Esophagus muscularis mucosa (tissue), 4 donors: ENCODE measurements at regions of chr3 and their contacts with region 1.

Region 1: DNA sequence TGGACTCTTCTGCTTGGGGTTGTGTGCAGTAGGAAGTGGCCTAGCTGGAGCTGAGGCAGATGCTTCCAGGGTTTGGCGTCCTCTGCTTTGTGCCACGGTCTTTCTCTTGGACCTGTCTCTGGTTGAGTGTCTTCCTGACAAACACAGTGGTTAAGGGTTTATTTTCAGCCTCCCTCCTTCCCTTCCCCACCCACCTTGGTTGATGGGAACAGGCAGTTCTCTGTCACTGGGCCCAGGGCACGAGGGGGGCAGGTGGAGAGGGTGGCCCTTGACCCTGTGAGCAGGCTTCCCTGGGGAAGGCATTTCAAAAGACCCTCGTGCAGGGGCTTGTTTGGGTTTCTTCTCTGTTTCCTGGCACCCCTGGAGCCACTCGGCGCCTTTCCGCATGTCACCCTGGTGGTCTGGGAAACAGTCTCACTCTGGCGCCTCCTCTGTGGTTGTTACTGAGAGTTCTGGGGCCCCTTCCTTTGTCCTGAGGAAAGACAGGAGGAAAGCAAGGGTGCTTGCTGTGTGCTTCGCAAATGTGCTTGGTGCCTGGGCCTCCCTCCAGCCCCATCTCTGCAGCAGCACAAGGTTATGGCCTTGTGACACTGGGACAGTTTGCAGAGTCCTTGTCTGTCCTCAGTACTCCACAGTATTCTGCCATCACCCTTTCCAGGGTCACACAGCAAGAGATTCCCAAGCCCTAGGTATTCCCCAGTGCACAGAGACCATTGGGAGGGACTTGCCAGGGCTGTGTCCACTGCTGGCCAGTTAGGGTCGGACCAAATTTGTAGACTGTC is 10.3 kb upstream of the STAB1 start:
- DNase-seq: no peak
- H3K4me3 ChIP-seq: no peak overlapping the region
- H3K27ac ChIP-seq: peak overlapping the region; percentile 67 to 84 (median 76)
- H3K4me1 ChIP-seq: peaks cover 30 to 59% (median 46%) of the 10 kb centered on the region in 4 donors
- H3K27me3 ChIP-seq: no peaks in the 10 kb centered on the region
- CTCF ChIP-seq: no peak
- EP300 ChIP-seq: no peak
- POLR2A ChIP-seq: no peak

Region 2: GRCh38 chr3:52406231-52406661 is 78.6 kb before region 1 on chr3:
- intact Hi-C with region 1: no loop called
- DNase-seq: no peak
- H3K4me3 ChIP-seq: no peak overlapping the region
- H3K27ac ChIP-seq: no peak overlapping the region
- H3K4me1 ChIP-seq: peaks cover 17 to 43% (median 31%) of the 10 kb centered on the region in 4 donors
- H3K27me3 ChIP-seq: no peaks in the 10 kb centered on the region
- CTCF ChIP-seq: no peak
- EP300 ChIP-seq: no peak
- POLR2A ChIP-seq: no peak

Region 3: DNA sequence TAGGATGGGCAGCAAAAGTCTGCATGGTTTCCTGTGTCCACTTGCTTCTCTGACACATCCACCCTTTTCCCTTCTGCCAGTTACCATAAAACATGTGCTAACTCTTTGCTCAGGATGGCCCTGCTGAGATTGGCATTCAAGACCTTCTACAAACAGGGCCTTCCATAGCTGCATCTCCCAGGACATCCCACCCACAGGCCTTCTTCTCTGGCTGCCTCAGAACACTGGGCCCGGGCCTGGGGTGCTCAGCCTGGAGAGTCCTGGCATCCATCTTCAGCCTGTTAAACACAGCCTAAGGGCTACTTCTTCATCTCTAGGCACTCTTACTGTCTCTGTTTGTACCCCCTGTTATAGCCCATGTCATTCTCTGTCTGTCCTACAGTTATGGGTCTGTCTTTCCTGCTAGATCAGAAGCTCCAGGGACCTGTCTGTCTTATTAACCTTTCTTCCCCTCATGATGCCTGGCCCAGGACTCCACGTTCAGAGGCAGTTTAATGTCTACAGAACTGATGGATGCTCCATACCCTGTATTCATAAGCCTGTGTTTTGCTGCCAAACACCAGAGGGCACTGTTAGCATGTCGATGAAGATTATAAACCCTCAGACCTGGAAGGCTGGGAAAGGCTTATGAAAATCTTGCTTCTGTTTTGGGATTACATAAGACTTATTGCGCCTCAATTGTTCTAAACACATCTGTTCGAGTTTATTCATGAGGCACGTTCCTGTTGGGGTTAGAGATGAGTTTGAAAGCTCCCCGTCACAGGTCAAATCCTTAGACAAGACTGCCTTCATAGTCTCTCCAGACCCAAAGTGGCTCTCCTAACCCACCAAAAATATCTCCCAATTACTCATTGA is 56.5 kb before region 1 on chr3:
- intact Hi-C with region 1: no loop called
- DNase-seq: no peak
- H3K4me3 ChIP-seq: no peak overlapping the region
- H3K27ac ChIP-seq: peak overlapping the region in 1 of 4 donors; percentile 3
- H3K4me1 ChIP-seq: peaks cover 13 to 35% (median 20%) of the 10 kb centered on the region in 4 donors
- H3K27me3 ChIP-seq: no peaks in the 10 kb centered on the region
- CTCF ChIP-seq: peak; percentile 74 to 81 (median 76)
- EP300 ChIP-seq: no peak
- POLR2A ChIP-seq: no peak

Region 4: DNA sequence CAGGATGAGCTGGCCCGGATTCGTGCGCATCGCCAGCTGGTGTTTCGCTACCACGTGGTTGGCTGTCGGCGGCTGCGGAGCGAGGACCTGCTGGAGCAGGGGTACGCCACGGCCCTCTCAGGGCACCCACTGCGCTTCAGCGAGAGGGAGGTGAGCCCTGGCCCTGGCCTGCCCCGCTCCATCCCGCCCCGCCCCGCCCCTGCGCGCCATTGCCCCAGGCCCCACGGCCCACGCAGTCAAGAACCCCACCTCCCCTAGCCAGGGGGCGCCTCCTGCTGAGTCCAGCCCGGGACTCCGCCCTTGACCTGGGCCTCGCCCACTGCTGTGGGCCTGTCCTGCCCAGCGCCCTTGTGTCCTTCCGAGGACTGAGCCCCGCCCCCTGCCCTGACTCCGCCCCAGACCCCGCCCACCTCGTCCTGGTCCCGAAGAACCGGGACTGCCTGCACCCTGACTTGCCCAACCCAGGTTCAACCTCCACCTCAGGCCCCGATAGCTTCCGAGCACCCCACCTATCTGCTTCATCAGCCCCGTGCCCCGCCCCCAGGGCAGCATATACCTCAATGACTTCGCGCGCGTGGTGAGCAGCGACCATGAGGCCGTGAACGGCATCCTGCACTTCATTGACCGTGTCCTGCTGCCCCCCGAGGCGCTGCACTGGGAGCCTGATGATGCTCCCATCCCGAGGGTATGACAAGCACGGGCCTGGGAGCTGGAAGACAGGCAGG is 34.0 kb after region 1 on chr3:
- intact Hi-C with region 1: no loop called
- DNase-seq: no peak
- H3K4me3 ChIP-seq: peak overlapping the region; percentile 39 to 54 (median 40)
- H3K27ac ChIP-seq: no peak overlapping the region
- H3K4me1 ChIP-seq: peaks cover 0 to 12% (median 11%) of the 10 kb centered on the region in 4 donors
- H3K27me3 ChIP-seq: no peaks in the 10 kb centered on the region
- CTCF ChIP-seq: no peak
- EP300 ChIP-seq: no peak
- POLR2A ChIP-seq: no peak

Region 5: DNA sequence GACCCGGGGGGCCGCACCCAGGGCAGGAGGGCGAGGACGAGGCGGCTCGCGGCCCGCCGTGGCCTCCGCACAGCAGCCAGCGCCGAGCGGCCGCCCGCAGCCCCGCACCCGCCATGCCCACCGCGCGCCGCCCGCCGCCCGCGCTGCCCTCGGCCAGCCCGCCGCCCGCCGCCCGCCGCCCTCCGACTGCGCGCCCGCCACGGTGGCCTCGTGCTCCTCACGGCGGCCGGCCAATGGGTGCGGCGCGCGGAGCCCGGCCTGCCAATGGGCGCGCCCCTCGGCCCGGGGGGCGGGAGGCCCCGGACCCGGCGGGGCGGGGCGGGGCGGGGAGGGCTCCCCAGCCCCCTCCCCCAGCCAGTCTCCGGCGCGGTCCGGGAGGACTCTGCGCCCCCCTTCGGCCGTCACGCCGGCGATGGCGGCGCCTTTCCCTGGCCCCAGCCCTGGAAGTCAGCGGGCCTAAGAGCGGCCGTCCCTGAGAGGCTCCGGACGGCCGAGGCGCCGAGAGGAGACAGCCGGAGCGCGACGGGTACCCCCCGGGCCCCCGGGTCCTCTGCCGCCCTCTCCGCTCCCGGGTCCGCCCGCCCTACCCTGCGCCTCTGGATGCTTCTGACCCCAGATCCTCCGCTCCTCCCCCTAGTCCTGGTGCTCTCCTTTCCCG is 48.9 kb after region 1 on chr3 and contains the start of gene NT5DC2:
- intact Hi-C with region 1: loop called (anchors 5 kb)
- DNase-seq: no peak
- H3K4me3 ChIP-seq: peak within 1 kb of the TSS; percentile 69 to 88 (median 76)
- H3K27ac ChIP-seq: peak within 1 kb of the TSS; percentile 87 to 95 (median 88)
- H3K4me1 ChIP-seq: peaks cover 77 to 92% (median 89%) of the 10 kb centered on the region in 4 donors
- H3K27me3 ChIP-seq: no peaks in the 10 kb centered on the region
- CTCF ChIP-seq: no peak
- EP300 ChIP-seq: no peak
- POLR2A ChIP-seq: no peak
- total RNA-seq, gene NT5DC2: 58.0 to 87.4 (median 72.9) TPM